ENCODE measurements at regions of chr10 and their contacts with region 1.

Region 1: GRCh38 chr10:119596537-119597404 is at the start of gene TIAL1:
- DNase-seq: peak; percentile 97
- H3K4me3 Mint-ChIP-seq: peak within 1 kb of the TSS; percentile 90
- H3K27ac Mint-ChIP-seq: peak within 1 kb of the TSS; percentile 94
- H3K4me1 Mint-ChIP-seq: peaks cover 45% of the 10 kb centered on the region
- H3K27me3 Mint-ChIP-seq: no peaks in the 10 kb centered on the region
- total RNA-seq, gene TIAL1: 212 and 218 TPM in 2 replicates

Region 2: GRCh38 chr10:119080521-119081260 is 516.1 kb before region 1 on chr10 and contains the start of gene EIF3A:
- intact Hi-C with region 1: loop called (anchors 5 kb)
- DNase-seq: peak; percentile 99
- H3K4me3 Mint-ChIP-seq: peak within 1 kb of the TSS; percentile 87
- H3K27ac Mint-ChIP-seq: peak within 1 kb of the TSS; percentile 92
- H3K4me1 Mint-ChIP-seq: peaks cover 29% of the 10 kb centered on the region
- H3K27me3 Mint-ChIP-seq: no peaks in the 10 kb centered on the region
- total RNA-seq, gene EIF3A: 179 and 183 TPM in 2 replicates

Region 3: DNA sequence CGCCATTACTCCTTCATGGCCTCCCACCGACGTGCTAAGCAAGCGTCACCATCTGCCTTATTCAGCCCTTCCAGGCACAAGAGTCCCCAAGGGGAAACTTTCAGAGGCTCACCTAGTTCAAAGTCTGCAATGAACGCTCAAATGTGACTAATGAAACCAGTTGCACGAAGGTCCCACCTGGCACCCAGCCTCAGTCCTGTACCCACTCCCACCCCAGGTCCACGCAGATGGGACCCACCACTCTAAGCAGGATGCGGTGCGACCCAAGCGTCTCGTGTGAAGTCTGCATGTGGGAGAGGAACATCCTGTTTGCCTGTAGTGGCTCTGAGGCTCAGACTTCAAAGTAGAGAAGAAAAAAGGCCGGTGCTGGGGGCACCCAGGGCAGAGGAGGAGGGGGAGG is 94.6 kb before region 1 on chr10:
- intact Hi-C with region 1: loop called (anchors 5 kb)
- DNase-seq: peak; percentile 93
- H3K4me3 Mint-ChIP-seq: peak overlapping the region; percentile 72
- H3K27ac Mint-ChIP-seq: peak overlapping the region; percentile 97
- H3K4me1 Mint-ChIP-seq: peaks cover 73% of the 10 kb centered on the region
- H3K27me3 Mint-ChIP-seq: no peaks in the 10 kb centered on the region

Region 4: DNA sequence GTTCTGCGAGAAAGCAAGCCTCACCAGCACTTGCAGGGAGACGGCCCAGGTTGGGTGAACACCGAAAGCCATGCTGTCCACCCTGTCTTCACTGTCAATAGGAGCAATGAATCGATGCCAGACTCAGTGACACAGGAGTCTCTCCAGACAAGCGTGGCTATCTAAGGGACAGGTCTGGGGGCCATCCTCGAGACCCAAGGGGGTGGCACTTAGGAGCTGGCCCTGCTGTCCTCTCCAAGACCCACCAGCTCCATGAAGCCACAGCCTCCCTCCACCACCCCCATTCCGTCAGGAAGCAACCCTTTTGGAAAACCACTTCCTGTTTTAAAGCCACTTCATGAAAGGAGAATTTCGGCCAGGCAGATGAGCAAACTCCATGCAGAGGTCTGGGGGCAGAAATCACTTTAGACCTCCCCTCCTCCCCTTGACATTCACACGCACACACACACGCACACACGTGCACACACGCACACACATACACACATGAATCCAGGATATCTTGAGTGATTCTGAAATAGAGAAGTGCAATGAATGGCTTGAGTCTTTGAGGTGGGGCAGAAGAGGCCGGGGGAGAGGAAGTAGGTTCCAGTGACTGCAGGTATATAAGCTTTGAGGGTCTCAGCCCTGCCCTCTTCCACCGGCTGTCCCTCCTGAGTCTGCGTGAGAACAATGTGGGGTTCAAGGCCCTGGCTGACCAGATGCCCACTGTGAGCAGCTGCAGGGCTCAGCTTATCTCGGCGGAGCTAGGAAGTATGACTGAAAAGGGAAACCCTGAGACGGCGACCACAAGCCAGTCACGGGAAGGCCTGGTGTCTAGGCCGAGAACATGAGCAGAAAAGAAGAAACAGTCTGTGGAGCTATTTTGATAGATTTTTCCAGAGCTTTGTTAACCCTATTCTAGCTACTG is 79.3 kb before region 1 on chr10:
- intact Hi-C with region 1: no loop called
- DNase-seq: peak; percentile 87
- H3K4me3 Mint-ChIP-seq: peak overlapping the region; percentile 75
- H3K27ac Mint-ChIP-seq: peak overlapping the region; percentile 90
- H3K4me1 Mint-ChIP-seq: peaks cover 48% of the 10 kb centered on the region
- H3K27me3 Mint-ChIP-seq: no peaks in the 10 kb centered on the region

Region 5: GRCh38 chr10:119575506-119575905 is 21.3 kb before region 1 on chr10:
- intact Hi-C with region 1: loop called (anchors 2 kb)
- DNase-seq: peak; percentile 80
- H3K4me3 Mint-ChIP-seq: peak overlapping the region; percentile 57
- H3K27ac Mint-ChIP-seq: peak overlapping the region; percentile 76
- H3K4me1 Mint-ChIP-seq: peaks cover 16% of the 10 kb centered on the region
- H3K27me3 Mint-ChIP-seq: no peaks in the 10 kb centered on the region

Region 6: DNA sequence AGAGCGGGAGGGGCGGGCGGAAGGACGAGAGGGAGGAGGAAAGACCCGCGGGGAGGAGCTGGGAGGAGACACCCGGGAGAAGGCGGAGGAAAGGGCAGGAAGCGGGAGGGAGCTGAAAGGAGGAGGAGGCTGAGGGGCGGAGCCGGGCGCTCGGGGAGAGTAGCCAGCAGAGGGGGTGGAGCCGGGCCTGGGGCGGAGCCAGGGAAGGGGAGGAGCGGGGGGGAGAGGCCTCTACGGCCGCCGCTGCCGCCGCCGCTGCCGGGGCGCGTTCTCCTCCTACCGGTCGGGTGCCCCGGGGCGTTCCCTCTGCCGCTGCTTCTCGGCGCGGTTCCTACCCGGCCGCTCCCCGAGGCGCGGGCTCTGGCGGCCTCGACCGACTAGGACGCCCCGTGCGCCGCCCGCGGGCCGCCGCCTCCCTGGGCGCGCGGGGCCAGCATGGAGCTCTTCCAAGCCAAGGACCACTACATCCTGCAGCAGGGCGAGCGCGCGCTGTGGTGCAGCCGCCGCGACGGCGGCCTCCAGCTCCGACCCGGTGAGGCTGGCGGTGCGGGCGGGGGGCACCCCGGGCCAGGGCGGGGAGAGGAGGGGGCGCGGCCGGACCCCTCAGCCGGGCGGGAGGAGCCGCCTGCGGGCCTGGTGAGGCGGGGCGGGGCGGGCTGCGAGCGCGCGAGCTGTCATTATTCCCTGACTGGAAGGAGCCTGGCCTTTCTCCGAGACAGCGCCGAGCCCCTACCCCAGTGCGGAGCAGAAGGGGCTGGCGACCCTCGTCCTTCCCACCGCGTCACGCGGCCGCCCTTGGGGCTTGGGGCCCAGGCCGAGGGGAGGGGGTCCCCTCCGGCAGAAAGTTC is 129.3 kb after region 1 on chr10 and contains the start of gene INPP5F:
- intact Hi-C with region 1: loop called (anchors 5 kb)
- DNase-seq: peak; percentile 100
- H3K4me3 Mint-ChIP-seq: peak within 1 kb of the TSS; percentile 91
- H3K27ac Mint-ChIP-seq: peak within 1 kb of the TSS; percentile 86
- H3K4me1 Mint-ChIP-seq: peaks cover 37% of the 10 kb centered on the region
- H3K27me3 Mint-ChIP-seq: no peaks in the 10 kb centered on the region
- total RNA-seq, gene INPP5F: 18.1 and 18.3 TPM in 2 replicates

Region 7: DNA sequence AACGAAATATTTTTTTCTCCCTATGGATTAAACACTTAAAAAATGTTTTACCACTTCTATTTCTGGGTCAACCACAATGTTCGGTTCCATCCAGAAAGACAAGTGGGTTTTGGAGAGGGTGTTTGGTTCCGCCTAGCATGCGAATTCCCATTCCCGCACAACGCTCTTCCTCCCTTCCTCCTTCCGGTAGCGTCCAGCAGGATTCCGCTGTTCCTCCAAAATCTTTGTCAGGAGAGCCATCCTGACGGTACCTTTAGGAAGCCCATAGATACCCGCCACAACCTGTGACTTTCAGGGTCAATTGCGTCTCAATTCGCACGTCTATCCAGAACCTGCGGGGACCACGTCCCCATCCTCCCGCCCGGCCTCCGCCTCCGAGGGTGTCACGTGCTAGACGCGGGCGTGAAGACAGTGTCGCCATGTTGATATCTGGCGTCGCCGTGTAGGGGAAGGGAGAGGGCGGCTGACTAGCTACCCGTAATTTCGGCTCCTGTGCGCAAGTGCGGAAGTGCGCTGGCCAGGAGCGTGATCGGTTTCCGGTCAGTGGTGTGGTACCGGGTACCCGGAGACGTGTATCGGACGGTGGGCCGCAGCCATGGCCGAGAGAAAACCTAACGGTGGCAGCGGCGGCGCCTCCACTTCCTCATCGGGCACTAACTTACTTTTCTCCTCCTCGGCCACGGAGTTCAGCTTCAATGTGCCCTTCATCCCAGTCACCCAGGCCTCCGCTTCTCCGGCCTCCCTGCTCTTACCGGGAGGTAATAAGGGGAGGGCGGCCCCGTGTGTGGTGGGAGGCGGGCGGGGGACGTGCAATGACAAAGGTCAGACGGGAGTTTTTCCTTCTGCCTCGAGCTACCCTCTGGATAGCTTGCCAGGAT is 295.7 kb after region 1 on chr10 and contains the start of gene SEC23IP:
- intact Hi-C with region 1: loop called (anchors 1 kb)
- DNase-seq: peak; percentile 98
- H3K4me3 Mint-ChIP-seq: peak within 1 kb of the TSS; percentile 98
- H3K27ac Mint-ChIP-seq: peak within 1 kb of the TSS; percentile 95
- H3K4me1 Mint-ChIP-seq: peaks cover 32% of the 10 kb centered on the region
- H3K27me3 Mint-ChIP-seq: peaks cover 2% of the 10 kb centered on the region
- total RNA-seq, gene SEC23IP: 78.0 and 90.3 TPM in 2 replicates